ENCODE measurements at regions of chr4 and their contacts with region 1.

Region 1: DNA sequence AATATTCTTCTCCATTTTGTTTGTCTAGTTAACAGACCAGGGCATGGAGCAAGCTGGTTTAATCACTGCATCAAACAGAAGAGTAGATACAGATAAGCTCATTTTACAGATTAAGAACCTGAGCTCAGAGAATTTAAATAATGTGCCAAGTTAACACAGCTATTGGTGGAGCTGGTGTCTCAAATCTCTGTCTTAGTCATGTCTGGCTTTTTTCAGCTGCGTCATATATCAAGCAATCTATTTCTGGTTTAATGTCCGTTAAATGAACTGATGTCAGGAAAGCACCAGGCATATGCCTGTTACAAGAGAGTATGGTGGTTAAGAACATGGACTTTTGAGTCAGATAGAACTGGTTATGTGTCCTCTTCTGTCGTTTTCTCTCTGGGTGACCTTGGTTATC is 79.8 kb upstream of the ADGRA3 start:
- DNase-seq: no peak
- ATAC-seq: no peak

Region 2: DNA sequence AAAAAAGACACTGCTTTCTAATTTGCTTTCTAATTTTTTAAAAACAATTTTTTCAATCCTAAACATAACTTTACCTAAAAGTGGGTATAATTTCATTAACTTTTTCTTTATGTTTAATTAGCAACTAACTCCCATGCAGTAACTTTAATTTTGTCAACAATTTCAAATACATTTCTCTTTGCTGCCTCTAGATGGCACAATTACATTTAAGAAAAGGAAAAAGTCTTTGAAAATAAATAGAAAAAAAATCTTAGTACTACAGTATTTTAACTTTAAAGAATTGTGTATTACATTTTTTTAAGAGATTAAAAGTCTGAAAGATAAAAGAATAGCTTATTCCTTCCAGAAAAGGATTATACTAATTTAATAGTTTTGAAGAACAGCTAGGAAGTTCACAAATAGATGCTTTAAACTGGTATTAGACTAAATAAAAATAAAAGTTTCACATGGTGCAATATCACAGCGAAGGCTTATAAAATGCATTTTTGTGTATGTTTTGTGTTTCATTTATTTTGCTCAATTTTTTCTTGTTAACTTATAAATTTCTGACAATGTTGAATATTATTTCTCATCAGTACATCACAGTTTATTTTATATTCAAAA is 184.9 kb before region 1 on chr4:
- intact Hi-C with region 1: loop called in 1 of 2 experiments (anchors 10 kb)
- DNase-seq: no peak
- ATAC-seq: no peak

Region 3: GRCh38 chr4:22754126-22754525 is 158.4 kb after region 1 on chr4:
- intact Hi-C with region 1: no loop called
- DNase-seq: no peak
- ATAC-seq: no peak

Region 4: DNA sequence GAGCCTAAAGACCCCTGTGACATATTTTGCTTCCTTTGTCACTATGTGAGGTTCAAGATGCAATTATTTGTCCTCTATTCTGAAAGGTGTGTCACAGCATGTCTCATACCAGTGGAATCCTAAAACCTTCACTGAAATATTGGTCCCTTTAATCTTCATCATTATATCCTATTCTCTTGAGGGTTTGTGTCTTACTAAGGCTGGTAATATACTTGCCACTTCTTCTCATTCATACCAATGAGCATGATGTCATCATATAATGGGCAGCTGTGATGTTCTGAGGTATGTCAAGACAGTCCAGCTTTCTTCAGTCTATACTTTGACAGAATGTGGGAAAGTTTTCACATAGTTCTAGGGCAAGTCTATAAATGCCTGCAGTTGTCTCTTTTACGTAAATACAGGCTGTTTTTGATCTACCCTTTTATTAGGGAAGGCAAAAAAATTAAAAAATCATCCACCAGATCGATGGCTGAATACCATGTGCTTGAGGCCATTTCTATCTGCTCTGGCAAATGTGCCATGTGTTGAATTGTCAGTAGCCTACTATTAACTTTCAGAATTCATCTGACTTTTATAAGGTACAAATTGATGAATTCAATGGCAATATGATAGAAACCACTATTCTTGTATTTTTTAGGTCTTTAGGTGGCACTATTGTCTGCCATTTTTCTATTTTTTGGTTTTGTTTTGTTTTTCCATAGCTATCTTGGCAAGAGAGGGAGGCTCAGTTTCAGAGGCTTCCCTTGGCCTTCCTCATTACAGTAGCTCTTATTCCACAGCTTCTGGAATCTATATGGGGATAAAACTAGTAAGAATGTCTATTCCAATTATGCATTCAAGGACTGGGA is 1085.2 kb after region 1 on chr4:
- intact Hi-C with region 1: no loop called
- DNase-seq: no peak
- ATAC-seq: no peak

Measured in left colon (tissue), 2 donors.